ENCODE measurements at regions of chr18 and their contacts with region 1.

Region 1: DNA sequence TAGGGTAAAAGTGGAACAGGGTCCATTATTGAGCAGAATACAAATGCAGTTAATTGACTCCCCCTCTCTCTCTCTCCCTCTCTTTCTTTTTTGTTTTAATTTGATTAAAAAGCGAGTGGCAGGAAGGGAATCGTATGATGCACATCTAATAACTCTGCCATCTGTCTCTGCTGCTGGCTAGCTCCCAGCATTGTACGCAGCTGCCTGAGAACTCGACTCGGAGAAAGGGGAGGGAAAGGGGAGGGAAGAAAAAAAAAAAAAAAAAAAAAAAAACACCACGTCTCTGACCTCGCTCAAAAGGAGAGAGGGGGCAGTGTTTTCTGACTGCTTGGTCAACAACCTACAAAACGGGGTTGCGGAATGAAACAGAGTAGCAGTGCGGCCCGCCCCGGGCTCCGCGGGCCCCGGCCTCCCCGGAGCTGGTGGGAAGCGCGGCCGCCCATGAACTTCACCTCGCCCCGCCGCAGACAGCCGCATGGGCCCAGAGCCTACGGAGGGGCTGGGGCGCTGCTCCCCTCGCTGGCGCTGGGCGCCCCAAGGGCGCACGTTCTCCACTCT is 265.7 kb downstream of the TCF4 start:
- DNase-seq: peak; percentile 67 to 96 (median 78)

Region 2: DNA sequence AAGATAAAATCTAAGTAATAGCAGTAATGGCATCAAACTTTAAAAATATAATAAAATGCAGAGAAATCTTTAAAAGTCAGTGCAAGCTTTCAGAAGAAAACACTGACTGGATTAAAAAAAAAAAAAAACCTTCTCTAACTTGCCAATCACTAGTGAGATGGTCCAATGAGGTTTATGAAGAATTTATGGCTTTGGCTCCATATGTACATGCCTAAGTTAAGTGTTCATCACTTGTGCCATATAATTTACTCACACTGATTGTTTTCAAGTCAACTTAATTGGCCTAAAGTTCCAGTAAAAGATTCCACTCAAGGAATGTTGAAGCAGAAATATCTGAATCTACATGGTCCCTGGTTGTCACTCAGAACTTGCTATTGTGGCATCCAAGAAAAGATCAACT is 534.6 kb before region 1 on chr18:
- intact Hi-C with region 1: no loop called
- DNase-seq: no peak

Region 3: GRCh38 chr18:55395799-55396198 is 73.5 kb after region 1 on chr18:
- intact Hi-C with region 1: loop called (anchors 5 kb)
- DNase-seq: peak in 3 of 10 donors; percentile 28 to 85 (median 48)